Mammary epithelial cell (primary cell): ENCODE measurements at regions of chr6 and their contacts with region 1.

Region 1: DNA sequence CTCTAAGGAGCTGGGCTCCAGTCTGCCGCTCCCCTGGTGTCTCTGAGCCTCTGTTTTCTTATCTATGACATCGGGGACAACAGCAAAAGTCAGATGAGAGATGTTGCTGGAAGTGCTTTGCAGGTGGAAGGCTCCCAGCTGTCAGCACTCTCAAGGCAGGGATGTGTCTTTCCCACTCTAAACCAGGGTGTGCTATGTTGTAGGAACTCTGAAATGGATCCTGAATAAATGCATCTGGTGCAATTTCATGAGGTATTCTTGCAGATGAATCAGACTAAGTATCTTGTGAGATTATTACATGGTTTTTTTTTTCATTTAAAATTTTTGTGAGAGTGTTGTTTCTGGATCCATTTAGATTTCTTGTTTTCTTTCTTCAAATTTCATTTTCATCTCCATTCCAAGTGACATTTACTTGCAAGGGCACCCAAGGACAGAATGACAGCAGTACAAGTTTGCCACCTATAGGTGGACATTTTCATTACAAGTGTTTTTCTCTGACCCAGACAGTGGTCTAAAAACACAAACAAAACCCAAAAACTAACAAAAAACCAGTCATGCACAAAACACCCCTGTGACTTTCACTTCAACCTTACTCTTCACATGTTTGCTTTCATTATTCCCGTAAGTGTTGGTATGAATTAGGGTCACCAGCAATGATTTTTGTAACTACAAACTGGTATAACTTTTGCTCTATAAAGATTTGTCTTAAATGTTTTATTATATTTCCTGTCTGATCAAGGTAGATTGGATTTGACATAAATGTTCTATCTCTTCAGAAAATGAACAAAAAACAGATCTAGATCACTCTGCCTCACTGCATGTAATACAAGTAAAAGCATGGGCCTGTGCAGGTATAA is 14.7 kb upstream of the SIM1 start:
- DNase-seq: no peak
- H3K4me3 ChIP-seq: no peak overlapping the region
- H3K27ac ChIP-seq: no peak overlapping the region
- H3K4me1 ChIP-seq: no peaks in the 10 kb centered on the region
- H3K27me3 ChIP-seq: no peaks in the 10 kb centered on the region
- CTCF ChIP-seq: peak; percentile 70 to 76

Region 2: DNA sequence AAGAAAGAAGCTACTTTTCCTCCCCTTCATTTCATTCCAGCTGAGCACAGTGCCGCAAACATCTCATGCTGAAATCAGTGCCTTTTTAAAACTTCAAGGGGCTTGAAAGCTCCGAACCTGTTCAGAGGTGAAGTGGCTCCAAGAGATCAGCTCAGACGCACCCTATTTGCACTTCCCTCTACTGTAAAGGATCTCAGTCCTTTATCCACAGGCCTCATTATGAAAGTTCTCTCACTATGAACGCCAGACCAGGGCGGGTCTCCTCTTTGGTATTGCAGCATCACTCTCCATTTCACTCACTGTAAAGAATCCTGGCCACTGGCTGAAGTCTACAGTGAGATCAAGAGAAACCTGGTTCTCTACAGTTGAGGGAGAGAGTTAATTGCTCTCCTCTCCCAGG is 1877.7 kb before region 1 on chr6:
- CTCF ChIA-PET with region 1: no interaction called
- dilution Hi-C with region 1: no loop called
- in situ Hi-C with region 1: no loop called
- intact Hi-C with region 1: no loop called
- DNase-seq: no peak
- H3K4me3 ChIP-seq: no peak overlapping the region
- H3K27ac ChIP-seq: no peak overlapping the region
- H3K4me1 ChIP-seq: no peaks in the 10 kb centered on the region
- H3K27me3 ChIP-seq: no peaks in the 10 kb centered on the region
- CTCF ChIP-seq: no peak

Region 3: GRCh38 chr6:99868074-99868702 is 611.2 kb before region 1 on chr6:
- CTCF ChIA-PET with region 1: no interaction called
- dilution Hi-C with region 1: no loop called
- in situ Hi-C with region 1: no loop called
- intact Hi-C with region 1: loop called (anchors 10 kb)
- DNase-seq: peak; percentile 48
- H3K4me3 ChIP-seq: no peak overlapping the region
- H3K27ac ChIP-seq: no peak overlapping the region
- H3K4me1 ChIP-seq: no peaks in the 10 kb centered on the region
- H3K27me3 ChIP-seq: peaks cover 4% of the 10 kb centered on the region
- CTCF ChIP-seq: peak; percentile 80

Region 4: DNA sequence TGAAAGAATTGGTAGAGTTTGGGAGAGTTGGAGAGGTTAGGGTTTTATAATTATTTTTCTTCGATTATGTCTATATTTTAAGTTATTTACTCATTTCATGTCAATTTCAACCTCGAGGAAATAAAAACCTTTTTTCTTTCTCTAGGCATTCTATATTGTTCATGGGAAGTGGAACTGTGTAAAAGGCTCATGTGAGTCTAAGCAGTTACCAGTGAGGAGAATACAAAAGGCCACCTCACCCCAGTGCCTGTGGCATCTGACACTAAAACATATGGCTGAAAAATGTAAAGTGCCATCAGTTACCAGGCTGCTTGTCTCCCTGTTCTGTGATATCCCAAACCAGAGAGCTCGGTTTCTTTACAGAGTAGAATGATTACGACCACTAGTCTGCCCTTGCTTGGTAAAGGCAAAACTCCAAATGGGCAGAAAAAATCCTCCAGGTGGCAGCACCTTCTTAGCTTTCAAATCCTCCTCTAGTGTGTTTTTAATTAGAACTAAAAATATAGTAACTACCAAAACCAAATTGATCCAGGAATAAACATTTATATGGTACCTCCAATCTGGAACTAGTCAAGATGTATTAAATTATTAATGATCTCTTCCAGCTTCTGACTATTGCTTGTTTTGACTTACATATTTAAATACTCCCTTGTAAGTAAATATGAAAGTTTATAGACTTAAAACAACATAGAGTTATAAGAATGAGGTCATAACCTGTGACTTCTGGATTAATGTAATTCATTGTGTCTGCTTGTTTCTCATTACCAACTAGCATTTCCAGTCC is 362.8 kb before region 1 on chr6:
- CTCF ChIA-PET with region 1: no interaction called
- dilution Hi-C with region 1: loop called (anchors 25 kb)
- in situ Hi-C with region 1: loop called (anchors 5 kb)
- intact Hi-C with region 1: loop called (anchors 1 kb)
- DNase-seq: peak; percentile 45
- H3K4me3 ChIP-seq: no peak overlapping the region
- H3K27ac ChIP-seq: no peak overlapping the region
- H3K4me1 ChIP-seq: no peaks in the 10 kb centered on the region
- H3K27me3 ChIP-seq: no peaks in the 10 kb centered on the region
- CTCF ChIP-seq: peak; percentile 71 to 74

Region 5: GRCh38 chr6:100283283-100283682 is 196.1 kb before region 1 on chr6:
- CTCF ChIA-PET with region 1: no interaction called
- dilution Hi-C with region 1: no loop called
- in situ Hi-C with region 1: no loop called
- intact Hi-C with region 1: no loop called
- DNase-seq: peak; percentile 37
- H3K4me3 ChIP-seq: no peak overlapping the region
- H3K27ac ChIP-seq: no peak overlapping the region
- H3K4me1 ChIP-seq: peaks cover 17% of the 10 kb centered on the region
- H3K27me3 ChIP-seq: no peaks in the 10 kb centered on the region
- CTCF ChIP-seq: no peak

Region 6: DNA sequence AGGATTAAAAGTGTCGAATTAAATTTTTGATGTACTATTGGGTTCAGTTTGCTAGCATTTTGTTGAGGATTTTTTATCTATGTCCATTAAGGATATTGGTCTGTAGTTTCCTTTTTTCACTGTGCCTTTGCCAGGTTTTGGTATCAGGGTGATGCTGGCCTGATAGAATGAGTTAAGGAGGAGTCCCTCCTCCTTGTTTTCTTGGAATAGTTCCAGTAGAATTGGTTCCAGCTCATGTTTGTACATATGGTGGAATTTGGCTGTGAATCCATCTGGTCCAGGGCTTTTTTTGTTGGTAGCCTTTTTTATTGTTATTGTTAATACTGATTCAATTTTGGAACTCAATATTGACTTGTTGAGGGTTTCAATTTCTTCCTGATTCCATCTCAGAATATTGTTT is 156.5 kb before region 1 on chr6:
- CTCF ChIA-PET with region 1: no interaction called
- dilution Hi-C with region 1: no loop called
- in situ Hi-C with region 1: loop called in 1 of 2 experiments (anchors 10 kb)
- intact Hi-C with region 1: loop called (anchors 1 kb)
- DNase-seq: no peak
- H3K4me3 ChIP-seq: no peak overlapping the region
- H3K27ac ChIP-seq: no peak overlapping the region
- H3K4me1 ChIP-seq: no peaks in the 10 kb centered on the region
- H3K27me3 ChIP-seq: no peaks in the 10 kb centered on the region
- CTCF ChIP-seq: no peak

Region 7: GRCh38 chr6:100404051-100404450 is 75.4 kb before region 1 on chr6:
- CTCF ChIA-PET with region 1: no interaction called
- dilution Hi-C with region 1: no loop called
- in situ Hi-C with region 1: no loop called
- intact Hi-C with region 1: no loop called
- DNase-seq: no peak
- H3K4me3 ChIP-seq: no peak overlapping the region
- H3K27ac ChIP-seq: no peak overlapping the region
- H3K4me1 ChIP-seq: no peaks in the 10 kb centered on the region
- H3K27me3 ChIP-seq: no peaks in the 10 kb centered on the region
- CTCF ChIP-seq: no peak

Region 8: DNA sequence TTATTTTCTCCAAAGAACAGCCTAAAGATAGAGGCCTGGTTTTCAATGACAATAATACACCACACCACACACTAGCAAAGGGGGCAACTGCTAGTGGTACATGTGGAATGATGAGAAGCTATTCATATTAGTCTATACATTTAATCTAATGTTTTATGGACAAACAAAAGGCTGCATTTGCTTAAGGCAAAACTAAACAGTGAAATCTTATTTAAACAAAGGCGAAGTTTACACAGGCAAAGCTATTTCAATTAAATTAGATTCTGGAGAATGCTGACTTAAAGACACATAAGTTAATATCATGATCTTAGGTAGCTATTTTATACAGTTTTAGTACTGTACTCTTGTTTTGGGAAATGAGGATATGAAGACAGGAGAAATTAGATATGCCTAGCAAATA is 39.2 kb after region 1 on chr6:
- CTCF ChIA-PET with region 1: no interaction called
- dilution Hi-C with region 1: no loop called
- in situ Hi-C with region 1: no loop called
- intact Hi-C with region 1: no loop called
- DNase-seq: no peak
- H3K4me3 ChIP-seq: no peak overlapping the region
- H3K27ac ChIP-seq: no peak overlapping the region
- H3K4me1 ChIP-seq: no peaks in the 10 kb centered on the region
- H3K27me3 ChIP-seq: no peaks in the 10 kb centered on the region
- CTCF ChIP-seq: no peak

Region 9: GRCh38 chr6:100657678-100658330 is 178.4 kb after region 1 on chr6:
- CTCF ChIA-PET with region 1: no interaction called
- dilution Hi-C with region 1: no loop called
- in situ Hi-C with region 1: loop called in 1 of 2 experiments (anchors 10 kb)
- intact Hi-C with region 1: loop called (anchors 2 kb)
- DNase-seq: no peak
- H3K4me3 ChIP-seq: no peak overlapping the region
- H3K27ac ChIP-seq: no peak overlapping the region
- H3K4me1 ChIP-seq: peaks cover 2% of the 10 kb centered on the region
- H3K27me3 ChIP-seq: no peaks in the 10 kb centered on the region
- CTCF ChIP-seq: peak; percentile 63 to 64